ENCODE measurements at regions of chr15 and their contacts with region 1.

Region 1: GRCh38 chr15:31953478-31953877 is 76.8 kb upstream of the CHRNA7 start:
- DNase-seq: no peak
- ATAC-seq: no peak
- H3K4me3 ChIP-seq: no peak overlapping the region
- H3K4me3 Mint-ChIP-seq: no peak overlapping the region
- H3K27ac ChIP-seq: no peak overlapping the region
- H3K27ac Mint-ChIP-seq: no peak overlapping the region
- H3K4me1 ChIP-seq: no peaks in the 10 kb centered on the region
- H3K4me1 Mint-ChIP-seq: no peaks in the 10 kb centered on the region
- H3K27me3 ChIP-seq: peaks cover 12 to 15% of the 10 kb centered on the region in 2 experiments
- H3K27me3 Mint-ChIP-seq: peaks cover 38% of the 10 kb centered on the region
- CTCF ChIP-seq: no peak

Region 2: DNA sequence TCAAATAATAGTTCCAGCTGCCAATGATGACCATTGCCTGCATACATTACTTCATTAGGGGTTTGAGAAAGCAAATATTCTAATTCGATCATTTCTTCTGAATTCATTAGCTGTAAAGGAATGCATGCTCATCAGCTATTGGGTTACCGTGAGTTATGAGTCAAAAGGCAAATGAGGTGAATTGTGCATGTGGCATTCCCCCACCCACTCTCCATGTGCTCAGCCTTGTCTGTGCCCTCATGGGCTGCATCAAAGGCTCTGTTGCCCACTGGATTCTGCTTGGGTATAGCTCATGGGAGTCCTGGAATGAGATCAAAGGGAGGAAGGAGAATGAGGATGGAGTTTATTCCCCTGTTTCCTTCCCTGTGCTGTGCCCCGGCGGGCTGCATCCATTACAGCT is 22.5 kb before region 1 on chr15:
- CTCF ChIA-PET with region 1: no interaction called
- POLR2A ChIA-PET with region 1: no interaction called
- intact Hi-C with region 1: no loop called
- DNase-seq: no peak
- ATAC-seq: no peak
- H3K4me3 ChIP-seq: no peak overlapping the region
- H3K4me3 Mint-ChIP-seq: no peak overlapping the region
- H3K27ac ChIP-seq: no peak overlapping the region
- H3K27ac Mint-ChIP-seq: no peak overlapping the region
- H3K4me1 ChIP-seq: no peaks in the 10 kb centered on the region
- H3K4me1 Mint-ChIP-seq: no peaks in the 10 kb centered on the region
- H3K27me3 ChIP-seq: peaks cover 4 to 11% of the 10 kb centered on the region in 2 experiments
- H3K27me3 Mint-ChIP-seq: peaks cover 37% of the 10 kb centered on the region
- CTCF ChIP-seq: no peak

Region 3: DNA sequence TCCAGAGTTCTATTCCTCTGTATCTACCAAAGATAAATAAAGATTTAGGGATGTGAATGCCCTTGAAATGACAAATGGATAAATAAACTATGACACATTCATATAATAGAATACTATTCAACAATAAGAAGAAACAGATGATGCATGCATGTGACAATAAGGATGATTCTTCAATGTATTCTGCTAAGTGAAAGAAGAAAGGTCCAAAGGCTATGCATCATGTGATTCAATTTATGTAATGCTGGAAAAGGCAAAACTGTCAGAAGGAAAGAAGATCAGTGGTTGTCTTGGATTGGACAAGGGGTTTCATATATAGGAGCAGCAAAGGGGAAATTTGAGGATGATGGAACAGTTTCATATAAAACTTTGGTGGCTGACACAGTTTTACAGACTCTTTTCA is 44.2 kb after region 1 on chr15:
- CTCF ChIA-PET with region 1: no interaction called
- POLR2A ChIA-PET with region 1: no interaction called
- intact Hi-C with region 1: no loop called
- DNase-seq: no peak
- ATAC-seq: no peak
- H3K4me3 ChIP-seq: no peak overlapping the region
- H3K4me3 Mint-ChIP-seq: no peak overlapping the region
- H3K27ac ChIP-seq: no peak overlapping the region
- H3K27ac Mint-ChIP-seq: no peak overlapping the region
- H3K4me1 ChIP-seq: no peaks in the 10 kb centered on the region
- H3K4me1 Mint-ChIP-seq: no peaks in the 10 kb centered on the region
- H3K27me3 ChIP-seq: peaks cover 2 to 10% of the 10 kb centered on the region in 2 experiments
- H3K27me3 Mint-ChIP-seq: peaks cover 29% of the 10 kb centered on the region
- CTCF ChIP-seq: no peak

Region 4: GRCh38 chr15:32014953-32015352 is 61.5 kb after region 1 on chr15:
- CTCF ChIA-PET with region 1: no interaction called
- POLR2A ChIA-PET with region 1: no interaction called
- intact Hi-C with region 1: loop called in 1 of 2 experiments (anchors 10 kb)
- DNase-seq: no peak
- ATAC-seq: no peak
- H3K4me3 ChIP-seq: no peak overlapping the region
- H3K4me3 Mint-ChIP-seq: no peak overlapping the region
- H3K27ac ChIP-seq: no peak overlapping the region
- H3K27ac Mint-ChIP-seq: no peak overlapping the region
- H3K4me1 ChIP-seq: no peaks in the 10 kb centered on the region
- H3K4me1 Mint-ChIP-seq: no peaks in the 10 kb centered on the region
- H3K27me3 ChIP-seq: peaks cover 4 to 5% of the 10 kb centered on the region in 2 experiments
- H3K27me3 Mint-ChIP-seq: peaks cover 33% of the 10 kb centered on the region
- CTCF ChIP-seq: no peak